ENCODE measurements at regions of chr12 and their contacts with region 1.

Region 1: DNA sequence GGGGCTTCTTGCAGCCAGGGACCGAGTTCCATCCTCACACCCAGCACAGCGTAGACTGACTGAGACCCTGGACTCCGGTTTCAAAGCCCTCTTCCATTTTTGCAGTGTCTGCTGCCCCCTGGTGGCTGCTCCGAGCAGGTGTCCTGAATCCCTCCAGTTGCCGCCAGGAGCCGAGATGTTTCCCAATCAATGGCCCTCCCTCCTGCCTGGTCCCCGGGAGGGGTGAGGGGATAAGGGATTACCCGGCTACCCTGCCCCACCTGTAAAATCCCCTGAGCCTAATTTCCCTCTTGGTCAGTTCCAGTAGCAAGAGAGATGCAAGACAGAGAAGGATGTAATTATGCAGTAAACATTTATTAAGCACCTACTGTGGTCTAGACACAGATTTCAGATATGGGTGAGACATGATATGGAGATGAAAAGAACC is 55.0 kb downstream of the PHETA1 start:
- DNase-seq: peak; percentile 83 to 91
- ATAC-seq: peak; percentile 72
- H3K4me3 ChIP-seq: no peak overlapping the region
- H3K27ac ChIP-seq: no peak overlapping the region
- H3K4me1 ChIP-seq: no peaks in the 10 kb centered on the region
- H3K27me3 ChIP-seq: no peaks in the 10 kb centered on the region

Region 2: GRCh38 chr12:110896559-110896958 is 417.3 kb before region 1 on chr12:
- intact Hi-C with region 1: loop called (anchors 2 to 10 kb)
- DNase-seq: no peak
- ATAC-seq: no peak
- H3K4me3 ChIP-seq: no peak overlapping the region
- H3K27ac ChIP-seq: no peak overlapping the region
- H3K4me1 ChIP-seq: no peaks in the 10 kb centered on the region
- H3K27me3 ChIP-seq: no peaks in the 10 kb centered on the region

Region 3: GRCh38 chr12:111024205-111024801 is 289.5 kb before region 1 on chr12:
- intact Hi-C with region 1: loop called in 1 of 2 experiments (anchors 10 kb)
- DNase-seq: peak in 1 of 2 donors; percentile 63
- ATAC-seq: no peak
- H3K4me3 ChIP-seq: no peak overlapping the region
- H3K27ac ChIP-seq: no peak overlapping the region
- H3K4me1 ChIP-seq: no peaks in the 10 kb centered on the region
- H3K27me3 ChIP-seq: no peaks in the 10 kb centered on the region

Region 4: GRCh38 chr12:111274777-111275176 is 39.1 kb before region 1 on chr12:
- intact Hi-C with region 1: no loop called
- DNase-seq: no peak
- ATAC-seq: no peak
- H3K4me3 ChIP-seq: no peak overlapping the region
- H3K27ac ChIP-seq: no peak overlapping the region
- H3K4me1 ChIP-seq: no peaks in the 10 kb centered on the region
- H3K27me3 ChIP-seq: peaks cover 0 to 5% of the 10 kb centered on the region in 2 donors